ENCODE measurements at regions of chr7 and their contacts with region 1.

Region 1: GRCh38 chr7:47435889-47436312 is 146.0 kb downstream of the TNS3 start:
- DNase-seq: peak; percentile 58
- ATAC-seq: peak; percentile 91
- H3K4me3 Mint-ChIP-seq: no peak overlapping the region
- H3K27ac Mint-ChIP-seq: peak overlapping the region; percentile 45; the same call in 1 of the 2 replicates
- H3K4me1 Mint-ChIP-seq: no peaks in the 10 kb centered on the region
- H3K27me3 Mint-ChIP-seq: no peaks in the 10 kb centered on the region
- CTCF ChIP-seq: 0 out of 2 replicates have a peak, but pooled peaks have one; percentile 25

Region 2: GRCh38 chr7:47301105-47301477 is 134.8 kb before region 1 on chr7:
- CTCF ChIA-PET with region 1: interaction called, 13 read pairs
- POLR2A ChIA-PET with region 1: no interaction called
- DNase-seq: peak; percentile 62
- ATAC-seq: peak; percentile 79
- H3K4me3 Mint-ChIP-seq: no peak overlapping the region
- H3K27ac Mint-ChIP-seq: no peak overlapping the region
- H3K4me1 Mint-ChIP-seq: peaks cover 12% of the 10 kb centered on the region
- H3K27me3 Mint-ChIP-seq: no peaks in the 10 kb centered on the region
- CTCF ChIP-seq: no peak

Region 3: GRCh38 chr7:47482013-47482875 is 46.3 kb after region 1 on chr7:
- CTCF ChIA-PET with region 1: interaction called, 16 read pairs
- POLR2A ChIA-PET with region 1: no interaction called
- DNase-seq: no peak
- ATAC-seq: no peak
- H3K4me3 Mint-ChIP-seq: no peak overlapping the region
- H3K27ac Mint-ChIP-seq: no peak overlapping the region
- H3K4me1 Mint-ChIP-seq: peaks cover 54% of the 10 kb centered on the region
- H3K27me3 Mint-ChIP-seq: peaks cover 88% of the 10 kb centered on the region
- CTCF ChIP-seq: no peak

Region 4: GRCh38 chr7:47581806-47582763 is 146.2 kb after region 1 on chr7 and contains the start of gene TNS3:
- CTCF ChIA-PET with region 1: interaction called, 13 read pairs
- POLR2A ChIA-PET with region 1: no interaction called
- DNase-seq: peak; percentile 68
- ATAC-seq: peak; percentile 68
- H3K4me3 Mint-ChIP-seq: peak within 1 kb of the TSS; percentile 85
- H3K27ac Mint-ChIP-seq: peak within 1 kb of the TSS; percentile 29; the same call in 1 of the 2 replicates
- H3K4me1 Mint-ChIP-seq: peaks cover 54% of the 10 kb centered on the region
- H3K27me3 Mint-ChIP-seq: peaks cover 40% of the 10 kb centered on the region
- CTCF ChIP-seq: no peak; the same call in 1 of the 2 replicates
- total RNA-seq, gene TNS3: 28.3 to 37.7 TPM (median 29.6 TPM) in 3 replicates

Region 5: GRCh38 chr7:47818796-47819606 is 383.1 kb after region 1 on chr7:
- CTCF ChIA-PET with region 1: interaction called, 20 read pairs
- POLR2A ChIA-PET with region 1: no interaction called
- DNase-seq: peak; percentile 64
- ATAC-seq: peak; percentile 63
- H3K4me3 Mint-ChIP-seq: no peak overlapping the region
- H3K27ac Mint-ChIP-seq: no peak overlapping the region
- H3K4me1 Mint-ChIP-seq: peaks cover 16% of the 10 kb centered on the region
- H3K27me3 Mint-ChIP-seq: no peaks in the 10 kb centered on the region
- CTCF ChIP-seq: peak; percentile 69

Measured in WTC11 (cell line).